A549 (cell line): ENCODE measurements at regions of chr17 and their contacts with region 1.

Region 1: DNA sequence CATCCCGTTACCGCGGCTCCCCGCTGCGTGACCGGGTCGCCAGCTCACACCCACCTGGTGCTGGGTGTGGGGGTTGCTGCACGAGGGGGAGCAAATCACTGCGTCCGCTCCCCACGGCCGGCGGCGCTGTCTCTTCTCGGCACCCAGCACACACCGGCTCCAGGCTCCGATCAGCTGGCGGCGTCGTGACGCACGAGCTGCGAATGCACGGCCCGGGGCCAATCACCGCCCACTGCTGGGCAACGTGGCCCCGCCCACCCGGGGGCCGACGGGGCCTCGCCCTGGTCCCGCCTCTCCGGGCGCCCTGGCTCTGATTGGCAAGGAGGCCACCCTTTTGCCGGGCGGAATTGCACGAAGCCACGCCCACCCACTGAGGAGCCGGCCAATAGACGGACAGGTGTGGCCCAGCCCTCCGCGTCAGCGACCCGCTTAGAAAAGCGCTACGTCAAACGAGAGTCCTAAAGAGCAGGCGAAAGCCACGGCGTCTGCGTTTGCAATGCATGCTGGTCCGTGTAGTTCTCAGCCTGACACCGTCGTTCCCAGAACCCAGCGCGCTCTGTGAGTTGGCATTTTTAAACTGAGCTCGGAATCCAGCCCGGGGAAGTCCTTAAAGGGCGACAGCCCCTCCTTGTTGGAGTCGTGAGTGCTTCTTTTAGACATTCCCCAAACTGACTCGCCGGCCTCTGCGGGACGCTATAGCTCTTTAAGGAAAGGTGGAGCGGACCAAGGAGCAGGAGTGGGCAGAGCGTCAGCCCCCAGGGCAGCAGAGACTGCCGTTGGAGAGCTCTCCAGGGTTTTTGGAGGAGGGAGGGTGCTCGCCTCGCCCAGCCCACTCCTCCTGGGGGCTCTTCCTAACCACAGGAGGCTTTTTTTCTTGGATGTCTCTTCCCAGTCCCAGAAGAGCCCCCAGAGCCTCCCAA is 6.2 kb upstream of the TLCD2 start:
- DNase-seq: peak; percentile 100
- ATAC-seq: peak; percentile 55 to 76
- H3K4me3 ChIP-seq: peak overlapping the region; percentile 87
- H3K27ac ChIP-seq: peak overlapping the region; percentile 95 to 100
- H3K4me1 ChIP-seq: peaks cover 48% of the 10 kb centered on the region
- CTCF ChIP-seq: 0 out of 3 replicates have a peak, but pooled peaks have one; percentile 5
- EP300 ChIP-seq: no peak
- POLR2A ChIP-seq: peak; percentile 97
- RAD21 ChIP-seq: no peak

Region 2: DNA sequence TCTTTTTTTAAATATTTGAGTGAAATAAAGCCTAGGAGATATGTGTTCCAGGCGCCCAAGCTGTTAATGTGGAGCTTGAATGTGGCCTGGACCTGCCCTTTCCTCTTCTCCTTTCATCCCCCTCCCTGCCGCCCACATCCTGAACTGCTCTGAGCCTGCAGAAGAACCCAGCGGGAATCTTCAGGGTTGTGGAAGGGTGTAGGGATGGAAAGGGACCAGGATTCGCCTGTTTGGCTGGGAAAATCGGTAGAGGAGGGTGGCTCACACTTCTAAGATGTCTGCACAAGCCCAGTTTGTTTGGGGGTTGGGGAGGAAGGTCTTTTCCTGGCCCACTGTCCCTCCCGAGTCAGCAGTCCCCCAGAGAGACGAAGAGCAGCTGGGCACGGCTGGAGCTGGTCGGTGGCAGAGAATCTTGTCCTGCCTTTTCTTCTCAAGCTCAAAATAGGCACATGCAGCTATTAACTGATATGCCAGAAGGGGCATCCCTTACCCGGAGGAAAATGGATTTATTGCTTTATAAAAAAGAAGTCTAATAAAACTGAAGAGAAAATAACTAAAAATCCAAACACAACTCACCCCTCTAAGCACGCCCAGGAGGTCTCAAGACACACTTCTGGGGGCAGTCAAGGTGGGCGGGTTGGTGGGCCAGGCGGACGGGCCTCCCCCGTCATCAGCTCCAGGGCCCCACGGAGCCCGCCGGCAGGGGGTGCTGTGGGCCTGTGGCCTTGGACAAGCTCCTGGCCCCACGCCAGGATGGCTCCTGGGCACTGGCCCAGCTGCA is 142.2 kb before region 1 on chr17:
- CTCF ChIA-PET with region 1: interaction called, 15 read pairs
- POLR2A ChIA-PET with region 1: interaction called, 19 read pairs
- DNase-seq: peak; percentile 82 to 92
- ATAC-seq: peak; percentile 73 to 87
- H3K4me3 ChIP-seq: no peak overlapping the region
- H3K27ac ChIP-seq: peak overlapping the region in 1 of 2 experiments; percentile 65; a peak in 3 of 6 replicates
- H3K4me1 ChIP-seq: peaks cover 17% of the 10 kb centered on the region
- CTCF ChIP-seq: peak; percentile 98
- EP300 ChIP-seq: no peak
- POLR2A ChIP-seq: no peak
- RAD21 ChIP-seq: peak; percentile 95 to 100

Region 3: DNA sequence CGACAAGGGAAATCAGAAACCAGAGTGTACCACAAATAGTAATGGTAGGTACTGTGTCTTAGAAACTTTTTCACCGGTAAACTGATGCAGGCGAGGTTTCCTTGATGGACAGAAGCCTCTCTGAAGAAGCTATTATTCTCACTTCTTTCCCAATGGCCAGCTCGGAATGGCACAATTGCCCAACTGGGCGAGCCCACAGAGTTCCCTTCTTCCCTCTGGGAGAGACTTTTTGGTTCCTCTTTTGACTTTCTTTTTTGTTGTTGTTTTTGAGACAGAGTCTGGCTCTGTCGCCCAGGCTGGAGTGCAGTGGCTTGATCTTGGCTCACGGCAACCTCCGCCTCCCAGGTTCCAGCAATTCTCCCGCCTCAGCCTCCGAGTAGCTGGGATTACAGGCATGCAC is 104.6 kb before region 1 on chr17:
- CTCF ChIA-PET with region 1: no interaction called
- POLR2A ChIA-PET with region 1: no interaction called
- DNase-seq: no peak
- ATAC-seq: no peak
- H3K4me3 ChIP-seq: no peak overlapping the region
- H3K27ac ChIP-seq: no peak overlapping the region
- H3K4me1 ChIP-seq: no peaks in the 10 kb centered on the region
- CTCF ChIP-seq: no peak
- EP300 ChIP-seq: no peak
- POLR2A ChIP-seq: no peak
- RAD21 ChIP-seq: no peak

Region 4: DNA sequence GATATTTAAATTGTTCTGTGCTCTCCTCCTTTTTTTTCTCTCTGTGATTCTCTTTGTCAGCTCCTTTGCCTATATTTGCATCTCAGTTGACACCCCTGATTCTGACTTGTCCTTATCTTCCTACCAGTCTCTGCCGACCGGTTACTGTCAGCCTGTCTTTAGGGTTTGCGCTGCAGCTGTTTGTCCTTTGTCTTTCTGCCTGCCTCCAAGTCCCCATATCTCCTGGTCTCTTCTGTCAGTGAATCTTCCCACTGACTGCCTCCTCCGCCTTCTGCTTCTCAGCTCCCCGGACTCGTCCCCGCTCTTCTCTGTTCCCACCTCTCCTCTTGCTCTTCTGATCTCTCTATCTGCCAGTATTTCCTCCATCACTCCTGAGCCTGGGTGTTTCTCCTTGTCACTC is 11.3 kb before region 1 on chr17:
- CTCF ChIA-PET with region 1: interaction called, 11 read pairs
- POLR2A ChIA-PET with region 1: interaction called, 6 read pairs
- DNase-seq: no peak
- ATAC-seq: no peak
- H3K4me3 ChIP-seq: no peak overlapping the region
- H3K27ac ChIP-seq: no peak overlapping the region
- H3K4me1 ChIP-seq: peaks cover 7% of the 10 kb centered on the region
- CTCF ChIP-seq: no peak
- EP300 ChIP-seq: no peak
- POLR2A ChIP-seq: no peak
- RAD21 ChIP-seq: no peak

Region 5: DNA sequence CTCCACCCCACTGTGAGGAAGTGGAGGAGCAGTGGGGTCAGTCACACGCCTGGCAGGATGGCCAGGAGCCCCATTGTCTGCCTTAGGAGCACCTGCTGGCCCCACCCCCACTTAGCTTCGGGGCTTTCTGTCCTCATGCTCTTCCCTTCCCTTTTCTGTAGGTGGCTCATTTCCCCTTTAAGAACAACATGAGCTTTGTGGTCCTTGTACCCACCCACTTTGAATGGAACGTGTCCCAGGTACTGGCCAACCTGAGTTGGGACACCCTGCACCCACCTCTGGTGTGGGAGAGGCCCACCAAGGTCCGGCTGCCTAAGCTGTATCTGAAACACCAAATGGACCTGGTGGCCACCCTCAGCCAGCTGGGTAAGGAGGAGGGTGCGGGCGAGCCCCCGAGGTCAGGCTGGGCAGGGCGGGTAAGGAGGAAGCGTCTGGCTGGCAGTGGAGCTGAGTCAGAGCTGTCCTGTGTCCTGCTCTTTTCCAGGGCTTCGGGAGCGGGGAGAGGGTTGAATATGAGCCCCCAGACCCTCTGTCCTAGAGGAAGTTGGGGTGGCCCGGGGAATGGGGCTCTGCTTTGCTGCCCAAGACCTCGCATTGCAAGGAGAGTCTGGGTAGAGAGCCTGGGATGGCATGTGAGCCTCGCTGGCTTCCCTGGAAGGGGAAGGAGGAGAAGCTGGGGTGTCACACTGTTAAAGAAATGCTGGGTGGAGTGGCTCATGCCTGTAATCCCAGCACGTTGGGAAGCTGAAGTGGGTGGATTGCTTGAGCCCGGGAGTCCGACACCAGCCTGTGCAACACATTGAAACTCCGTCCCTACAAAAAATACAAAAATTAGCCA is 36.3 kb after region 1 on chr17:
- CTCF ChIA-PET with region 1: interaction called, 23 read pairs
- POLR2A ChIA-PET with region 1: interaction called, 10 read pairs
- DNase-seq: peak; percentile 68 to 83
- ATAC-seq: peak; percentile 88 to 92
- H3K4me3 ChIP-seq: peak overlapping the region; percentile 33
- H3K27ac ChIP-seq: peak overlapping the region; percentile 76 to 88
- H3K4me1 ChIP-seq: peaks cover 13% of the 10 kb centered on the region
- CTCF ChIP-seq: no peak
- EP300 ChIP-seq: no peak
- POLR2A ChIP-seq: peak; percentile 26; the same call in 1 of the 2 replicates
- RAD21 ChIP-seq: no peak

Region 6: GRCh38 chr17:1800240-1800639 is 83.9 kb after region 1 on chr17:
- CTCF ChIA-PET with region 1: interaction called, 14 read pairs
- POLR2A ChIA-PET with region 1: interaction called, 4 read pairs
- DNase-seq: no peak
- ATAC-seq: no peak
- H3K4me3 ChIP-seq: no peak overlapping the region
- H3K27ac ChIP-seq: no peak overlapping the region
- H3K4me1 ChIP-seq: no peaks in the 10 kb centered on the region
- CTCF ChIP-seq: no peak
- EP300 ChIP-seq: no peak
- POLR2A ChIP-seq: no peak
- RAD21 ChIP-seq: no peak

Region 7: DNA sequence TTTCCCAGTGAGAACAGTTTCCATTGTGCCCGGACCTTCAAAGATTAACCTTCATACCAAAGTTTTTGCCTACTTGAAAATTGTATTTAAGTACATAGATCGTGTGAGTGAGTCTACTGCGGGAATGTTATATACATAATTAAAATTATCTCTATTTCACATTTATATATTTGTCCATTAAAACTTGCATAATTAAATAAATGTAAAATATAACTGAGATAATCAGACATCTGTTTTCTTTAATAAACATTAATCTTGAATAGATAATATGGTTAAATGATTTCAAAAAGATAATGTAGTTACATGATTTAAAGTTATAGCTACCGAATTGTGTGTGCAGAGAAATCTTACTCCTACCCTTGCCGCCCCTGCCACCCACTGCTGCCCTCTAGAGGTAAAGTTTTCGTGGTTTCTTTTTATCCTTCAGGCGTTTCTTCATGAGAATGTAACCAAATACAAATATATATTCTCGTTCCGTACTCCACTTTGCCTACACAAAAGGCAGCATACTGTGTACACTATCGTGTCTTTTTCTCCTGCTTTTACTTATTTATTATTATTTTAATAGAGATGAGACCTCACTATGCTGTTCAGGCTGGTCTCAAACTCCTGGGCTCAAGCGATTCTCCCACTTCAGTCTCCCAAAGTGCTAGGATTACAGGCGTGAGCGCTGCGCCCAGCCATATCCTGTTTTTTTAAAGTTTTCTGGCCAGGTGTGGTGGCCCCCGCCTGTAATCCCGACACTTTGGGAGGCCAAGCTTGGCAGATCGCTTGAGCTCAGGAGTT is 149.1 kb after region 1 on chr17:
- CTCF ChIA-PET with region 1: interaction called, 52 read pairs
- POLR2A ChIA-PET with region 1: interaction called, 13 read pairs
- DNase-seq: peak; percentile 51 to 72
- ATAC-seq: peak; percentile 54 to 84; a peak in 5 of 6 replicates
- H3K4me3 ChIP-seq: no peak overlapping the region
- H3K27ac ChIP-seq: no peak overlapping the region
- H3K4me1 ChIP-seq: no peaks in the 10 kb centered on the region
- CTCF ChIP-seq: peak; percentile 91
- EP300 ChIP-seq: no peak
- POLR2A ChIP-seq: no peak
- RAD21 ChIP-seq: peak; percentile 67 to 71

Region 8: GRCh38 chr17:2416010-2416734 is 699.8 kb after region 1 on chr17:
- CTCF ChIA-PET with region 1: no interaction called
- POLR2A ChIA-PET with region 1: no interaction called
- DNase-seq: peak; percentile 84 to 88
- ATAC-seq: peak; percentile 76 to 85
- H3K4me3 ChIP-seq: no peak overlapping the region
- H3K27ac ChIP-seq: no peak overlapping the region
- H3K4me1 ChIP-seq: peaks cover 7% of the 10 kb centered on the region; the same call in 1 of the 3 replicates
- CTCF ChIP-seq: peak; percentile 98
- EP300 ChIP-seq: no peak
- POLR2A ChIP-seq: no peak
- RAD21 ChIP-seq: peak; percentile 95 to 96